Prostate gland (tissue), 2 donors: ENCODE measurements at regions of chr1 and their contacts with region 1.

Region 1: GRCh38 chr1:113677250-113678158 is 81.8 kb downstream of the PHTF1 start:
- DNase-seq: no peak
- H3K4me3 ChIP-seq: no peak overlapping the region
- H3K27ac ChIP-seq: no peak overlapping the region
- H3K4me1 ChIP-seq: no peaks in the 10 kb centered on the region
- H3K27me3 ChIP-seq: no peaks in the 10 kb centered on the region
- CTCF ChIP-seq: peak in 3 of 4 experiments; percentile 47 to 67 (median 60)
- POLR2A ChIP-seq: no peak

Region 2: DNA sequence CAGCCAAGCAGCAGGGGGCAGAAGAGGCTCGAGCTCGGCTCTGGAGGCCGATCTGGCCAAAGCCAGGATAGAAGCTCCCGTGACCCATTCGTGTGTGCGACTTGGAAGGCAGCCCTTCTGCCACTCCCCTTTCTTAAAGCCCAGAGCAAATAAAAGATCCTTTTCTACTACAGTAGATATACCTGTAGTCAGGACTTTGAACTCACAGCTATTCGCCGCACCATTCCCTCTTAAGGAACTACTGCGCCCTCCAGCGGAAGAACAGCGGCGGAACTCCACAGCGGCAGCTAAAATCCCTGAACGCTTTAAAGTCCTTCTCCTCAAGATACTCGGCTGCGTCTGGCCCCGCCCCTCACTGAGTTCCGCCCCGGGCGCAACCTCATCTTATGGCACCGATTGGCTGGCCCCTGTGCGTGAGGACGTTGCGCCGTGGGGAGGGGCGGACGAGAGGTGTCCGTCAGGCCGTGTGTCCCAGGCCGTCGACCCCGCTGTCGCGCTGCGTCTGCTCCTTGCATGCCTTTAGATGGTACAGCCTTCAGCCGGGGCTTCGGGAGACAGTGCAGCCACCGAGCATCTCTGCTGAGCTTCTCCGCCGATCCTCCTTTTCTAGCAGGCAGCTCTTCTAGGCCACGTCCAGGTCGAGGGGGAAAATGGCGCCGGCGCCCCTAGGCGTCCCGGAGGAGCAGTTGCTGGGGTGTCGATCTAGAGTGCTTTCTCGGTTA is 604.6 kb before region 1 on chr1 and contains the start of gene LRIG2:
- intact Hi-C with region 1: loop called (anchors 2 kb)
- DNase-seq: peak; percentile 99
- H3K4me3 ChIP-seq: peak within 1 kb of the TSS; percentile 72 to 88
- H3K27ac ChIP-seq: peak within 1 kb of the TSS; percentile 85 to 93
- H3K4me1 ChIP-seq: peaks cover 3% of the 10 kb centered on the region
- H3K27me3 ChIP-seq: no peaks in the 10 kb centered on the region
- CTCF ChIP-seq: peak; percentile 66 to 94 (median 90)
- POLR2A ChIP-seq: peak; percentile 90
- total RNA-seq, gene LRIG2: 20.8 to 26.6 TPM

Region 3: DNA sequence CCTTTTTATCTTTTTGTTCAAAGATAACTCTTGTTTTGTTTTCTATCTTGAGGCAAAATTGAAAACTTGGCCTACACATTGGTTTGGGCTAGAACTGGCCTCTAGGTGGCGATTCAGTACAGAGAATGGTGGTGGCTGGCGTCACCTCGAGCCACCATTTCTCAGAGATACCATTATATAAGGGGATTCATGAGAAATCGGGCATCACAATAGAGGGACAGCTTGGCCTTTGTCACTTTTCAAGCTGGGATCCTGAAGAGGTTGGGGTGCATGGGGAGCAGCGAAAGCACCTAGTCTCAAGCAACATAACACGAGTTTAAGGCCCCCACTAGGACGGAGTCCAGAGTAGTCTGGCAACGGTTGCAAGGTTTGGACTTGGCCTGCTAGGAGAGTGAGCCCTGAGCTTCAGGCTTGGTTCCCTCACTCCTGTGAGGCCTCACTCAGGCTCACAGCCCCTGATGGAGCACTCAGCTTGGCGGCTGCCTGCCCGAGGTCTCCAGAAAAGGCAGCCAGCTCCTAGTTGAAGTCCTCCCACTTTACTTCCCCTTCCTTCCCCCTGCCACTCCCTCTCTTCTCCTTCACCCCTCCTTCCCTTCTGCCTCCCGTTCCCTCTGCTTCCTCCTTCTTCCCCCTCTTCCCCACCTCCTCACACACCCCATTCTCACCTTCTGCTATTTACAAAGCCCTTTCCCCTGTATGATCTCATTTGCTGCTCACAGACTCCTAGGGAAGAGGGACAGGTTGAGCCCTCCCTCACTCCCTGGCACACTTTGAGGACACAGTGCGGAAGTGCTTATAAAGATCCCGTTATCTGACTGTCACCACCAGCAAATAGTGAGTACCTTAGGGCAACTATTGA is 536.7 kb before region 1 on chr1:
- intact Hi-C with region 1: loop called (anchors 2 kb)
- DNase-seq: peak; percentile 60
- H3K4me3 ChIP-seq: no peak overlapping the region
- H3K27ac ChIP-seq: no peak overlapping the region
- H3K4me1 ChIP-seq: no peaks in the 10 kb centered on the region
- H3K27me3 ChIP-seq: no peaks in the 10 kb centered on the region
- CTCF ChIP-seq: peak; percentile 46 to 89 (median 82)
- POLR2A ChIP-seq: no peak

Region 4: DNA sequence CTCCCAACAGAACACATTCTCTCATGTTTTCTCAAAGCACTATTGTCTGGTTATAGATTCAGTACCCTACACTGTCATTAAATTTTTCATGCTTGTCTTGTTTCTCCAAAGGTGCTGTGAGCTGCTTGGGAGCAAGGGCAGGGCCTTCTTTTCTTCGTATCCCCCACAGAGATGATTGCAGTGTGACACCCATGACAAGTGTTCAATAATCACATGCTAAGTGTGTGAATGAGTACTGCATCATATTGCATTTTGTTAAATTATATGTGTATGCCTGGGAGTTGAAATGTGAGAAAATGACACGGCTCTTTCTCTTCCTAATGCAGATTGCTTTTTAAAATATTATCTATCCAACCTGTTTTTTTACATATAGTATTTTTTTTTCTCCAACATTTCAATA is 344.4 kb before region 1 on chr1:
- intact Hi-C with region 1: no loop called
- DNase-seq: no peak
- H3K4me3 ChIP-seq: no peak overlapping the region
- H3K27ac ChIP-seq: no peak overlapping the region
- H3K4me1 ChIP-seq: no peaks in the 10 kb centered on the region
- H3K27me3 ChIP-seq: no peaks in the 10 kb centered on the region
- CTCF ChIP-seq: no peak
- POLR2A ChIP-seq: no peak

Region 5: GRCh38 chr1:113389953-113390834 is 287.3 kb before region 1 on chr1 and contains the start of gene MAGI3:
- intact Hi-C with region 1: loop called (anchors 10 kb)
- DNase-seq: peak; percentile 97
- H3K4me3 ChIP-seq: peak within 1 kb of the TSS; percentile 96 to 97
- H3K27ac ChIP-seq: peak within 1 kb of the TSS; percentile 90 to 94
- H3K4me1 ChIP-seq: no peaks in the 10 kb centered on the region
- H3K27me3 ChIP-seq: no peaks in the 10 kb centered on the region
- CTCF ChIP-seq: no peak
- POLR2A ChIP-seq: peak; percentile 86
- total RNA-seq, gene MAGI3: 20.2 to 23.2 TPM

Region 6: DNA sequence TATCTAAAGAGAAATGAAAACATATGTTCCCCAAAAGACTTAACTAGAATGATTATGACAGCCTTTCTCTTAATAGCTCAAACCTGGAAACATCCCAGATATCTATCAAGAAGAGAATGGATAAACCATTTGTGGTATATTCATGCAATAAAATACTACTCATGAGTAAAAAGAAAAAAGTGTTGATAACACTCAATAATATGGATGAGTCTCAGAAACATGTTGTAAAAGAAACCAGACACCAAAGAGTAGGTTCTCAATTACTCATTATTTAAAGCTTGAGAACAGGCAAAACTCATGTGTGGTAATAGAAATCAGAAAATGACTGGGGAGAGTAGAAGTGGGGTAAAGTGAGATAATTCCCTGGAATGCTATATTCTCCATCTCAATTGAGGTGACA is 72.4 kb before region 1 on chr1:
- intact Hi-C with region 1: no loop called
- DNase-seq: no peak
- H3K4me3 ChIP-seq: no peak overlapping the region
- H3K27ac ChIP-seq: no peak overlapping the region
- H3K4me1 ChIP-seq: no peaks in the 10 kb centered on the region
- H3K27me3 ChIP-seq: no peaks in the 10 kb centered on the region
- CTCF ChIP-seq: no peak
- POLR2A ChIP-seq: no peak

Region 7: GRCh38 chr1:113756461-113756860 is 79.0 kb after region 1 on chr1:
- intact Hi-C with region 1: no loop called
- DNase-seq: no peak
- H3K4me3 ChIP-seq: no peak overlapping the region
- H3K27ac ChIP-seq: no peak overlapping the region
- H3K4me1 ChIP-seq: no peaks in the 10 kb centered on the region
- H3K27me3 ChIP-seq: no peaks in the 10 kb centered on the region
- CTCF ChIP-seq: no peak
- POLR2A ChIP-seq: no peak